Mammary epithelial cell (primary cell): ENCODE measurements at regions of chr19 and their contacts with region 1.

Region 1: DNA sequence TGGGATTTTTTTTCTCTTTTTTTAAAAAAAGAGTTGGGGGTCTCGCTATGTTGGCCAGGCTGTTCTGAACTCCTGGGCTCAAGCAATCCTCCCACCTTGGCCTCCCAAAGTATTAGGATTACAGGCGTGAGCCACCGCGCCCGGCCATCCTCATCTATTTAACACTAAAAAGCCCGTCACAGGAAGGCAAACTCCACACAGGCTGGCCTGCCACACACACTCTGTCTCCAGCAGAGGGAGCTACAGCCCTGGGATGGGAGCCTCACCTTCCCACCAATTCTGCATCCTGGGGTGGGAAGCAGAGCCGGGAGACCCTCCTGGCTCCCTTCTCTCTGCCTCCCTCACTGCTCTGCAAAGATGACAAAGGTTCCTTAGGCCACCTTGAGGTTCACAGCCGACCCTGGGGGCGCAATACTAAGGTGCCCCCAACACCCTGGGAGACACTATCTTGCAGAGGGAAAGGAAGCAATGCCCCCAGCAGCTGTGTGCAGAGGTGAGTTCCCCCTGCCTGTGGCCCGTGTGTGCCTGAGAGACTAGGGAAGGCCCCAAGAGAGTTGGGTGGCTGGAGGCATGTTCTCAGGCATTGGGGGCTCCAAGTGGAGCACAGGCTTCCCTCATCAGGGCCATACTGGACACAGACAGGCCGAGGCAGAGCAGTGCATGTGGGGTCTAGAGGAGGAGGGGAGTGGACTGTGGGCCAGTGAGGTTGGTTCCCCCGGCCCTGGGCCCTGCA is 27.4 kb upstream of the TIMM44 start:
- DNase-seq: no peak
- H3K4me3 ChIP-seq: no peak overlapping the region
- H3K27ac ChIP-seq: no peak overlapping the region
- H3K4me1 ChIP-seq: no peaks in the 10 kb centered on the region
- H3K27me3 ChIP-seq: no peaks in the 10 kb centered on the region
- CTCF ChIP-seq: peak; percentile 79 to 86

Region 2: GRCh38 chr19:7515645-7516151 is 455.2 kb before region 1 on chr19 and contains the start of gene ZNF358:
- CTCF ChIA-PET with region 1: interaction called, 26 read pairs
- dilution Hi-C with region 1: no loop called
- in situ Hi-C with region 1: no loop called
- intact Hi-C with region 1: no loop called
- DNase-seq: no peak
- H3K4me3 ChIP-seq: peak within 1 kb of the TSS; percentile 54 to 58 (median 54)
- H3K27ac ChIP-seq: no peak within 1 kb of the TSS
- H3K4me1 ChIP-seq: peaks cover 4% of the 10 kb centered on the region
- H3K27me3 ChIP-seq: no peaks in the 10 kb centered on the region
- CTCF ChIP-seq: no peak
- total RNA-seq, gene ZNF358: 21.7 to 22.0 TPM

Region 3: DNA sequence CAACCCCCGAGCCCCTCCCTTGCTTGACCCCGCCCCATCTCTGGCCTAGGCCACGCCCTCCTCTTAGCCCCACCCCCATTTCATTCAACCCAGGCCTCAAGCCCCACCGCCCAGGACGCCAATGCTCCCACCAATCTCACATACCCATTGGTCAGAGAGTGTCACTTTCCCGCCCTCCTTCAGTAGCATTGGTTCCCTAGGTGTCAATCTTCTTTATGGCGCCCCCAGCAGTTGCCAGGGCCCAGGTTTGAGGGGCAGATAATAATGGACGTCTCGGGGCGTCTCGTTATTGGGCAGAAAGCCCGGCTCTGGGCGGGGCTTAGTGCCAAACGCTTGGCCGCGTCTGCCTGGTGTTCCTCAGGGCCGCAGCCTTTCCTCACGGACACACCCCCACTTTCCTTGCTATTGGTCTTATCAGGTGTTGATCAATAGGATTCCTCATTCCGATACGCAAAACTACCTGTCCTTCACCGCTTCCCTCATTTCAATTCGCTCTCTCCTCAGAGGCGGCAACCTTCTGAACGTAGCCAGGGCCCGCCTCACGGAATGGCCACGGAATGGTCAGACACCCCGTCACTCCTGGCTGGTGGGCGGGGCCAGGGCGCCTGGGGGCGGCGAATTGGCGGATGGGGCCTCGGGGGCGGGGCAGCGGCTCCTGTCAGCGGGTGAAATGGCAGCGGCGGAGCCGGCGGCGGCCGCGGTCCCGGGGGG is 141.2 kb before region 1 on chr19 and contains the start of gene EVI5L:
- CTCF ChIA-PET with region 1: no interaction called
- dilution Hi-C with region 1: no loop called
- in situ Hi-C with region 1: no loop called
- intact Hi-C with region 1: no loop called
- DNase-seq: peak; percentile 100
- H3K4me3 ChIP-seq: peak within 1 kb of the TSS; percentile 57 to 75 (median 60)
- H3K27ac ChIP-seq: no peak within 1 kb of the TSS
- H3K4me1 ChIP-seq: peaks cover 27% of the 10 kb centered on the region
- H3K27me3 ChIP-seq: no peaks in the 10 kb centered on the region
- CTCF ChIP-seq: no peak
- total RNA-seq, gene EVI5L: 15.2 to 17.5 TPM

Region 4: GRCh38 chr19:7871530-7872305 is 99.2 kb before region 1 on chr19:
- CTCF ChIA-PET with region 1: no interaction called
- dilution Hi-C with region 1: no loop called
- in situ Hi-C with region 1: no loop called
- intact Hi-C with region 1: no loop called
- DNase-seq: peak; percentile 88
- H3K4me3 ChIP-seq: peak overlapping the region in 2 of 3 experiments; percentile 38 to 39
- H3K27ac ChIP-seq: peak overlapping the region; percentile 30
- H3K4me1 ChIP-seq: peaks cover 36% of the 10 kb centered on the region
- H3K27me3 ChIP-seq: peaks cover 17% of the 10 kb centered on the region
- CTCF ChIP-seq: no peak

Region 5: GRCh38 chr19:7903244-7904073 is 67.4 kb before region 1 on chr19 and contains the start of gene MAP2K7:
- CTCF ChIA-PET with region 1: no interaction called
- dilution Hi-C with region 1: no loop called
- in situ Hi-C with region 1: no loop called
- intact Hi-C with region 1: no loop called
- DNase-seq: peak; percentile 99
- H3K4me3 ChIP-seq: peak within 1 kb of the TSS; percentile 69 to 96 (median 73)
- H3K27ac ChIP-seq: peak within 1 kb of the TSS; percentile 68
- H3K4me1 ChIP-seq: peaks cover 19% of the 10 kb centered on the region
- H3K27me3 ChIP-seq: no peaks in the 10 kb centered on the region
- CTCF ChIP-seq: peak; percentile 43 to 60
- total RNA-seq, gene MAP2K7: 11.3 to 33.3 TPM

Region 6: GRCh38 chr19:7919610-7920518 is 51.0 kb before region 1 on chr19 and contains the start of gene SNAPC2:
- CTCF ChIA-PET with region 1: interaction called, 17 read pairs
- dilution Hi-C with region 1: no loop called
- in situ Hi-C with region 1: no loop called
- intact Hi-C with region 1: no loop called
- DNase-seq: peak; percentile 90
- H3K4me3 ChIP-seq: peak within 1 kb of the TSS; percentile 76 to 86 (median 79)
- H3K27ac ChIP-seq: peak within 1 kb of the TSS; percentile 52
- H3K4me1 ChIP-seq: peaks cover 32% of the 10 kb centered on the region
- H3K27me3 ChIP-seq: peaks cover 14% of the 10 kb centered on the region
- CTCF ChIP-seq: peak in 1 of 2 donors; percentile 3
- total RNA-seq, gene SNAPC2: 11.2 to 27.2 TPM

Region 7: DNA sequence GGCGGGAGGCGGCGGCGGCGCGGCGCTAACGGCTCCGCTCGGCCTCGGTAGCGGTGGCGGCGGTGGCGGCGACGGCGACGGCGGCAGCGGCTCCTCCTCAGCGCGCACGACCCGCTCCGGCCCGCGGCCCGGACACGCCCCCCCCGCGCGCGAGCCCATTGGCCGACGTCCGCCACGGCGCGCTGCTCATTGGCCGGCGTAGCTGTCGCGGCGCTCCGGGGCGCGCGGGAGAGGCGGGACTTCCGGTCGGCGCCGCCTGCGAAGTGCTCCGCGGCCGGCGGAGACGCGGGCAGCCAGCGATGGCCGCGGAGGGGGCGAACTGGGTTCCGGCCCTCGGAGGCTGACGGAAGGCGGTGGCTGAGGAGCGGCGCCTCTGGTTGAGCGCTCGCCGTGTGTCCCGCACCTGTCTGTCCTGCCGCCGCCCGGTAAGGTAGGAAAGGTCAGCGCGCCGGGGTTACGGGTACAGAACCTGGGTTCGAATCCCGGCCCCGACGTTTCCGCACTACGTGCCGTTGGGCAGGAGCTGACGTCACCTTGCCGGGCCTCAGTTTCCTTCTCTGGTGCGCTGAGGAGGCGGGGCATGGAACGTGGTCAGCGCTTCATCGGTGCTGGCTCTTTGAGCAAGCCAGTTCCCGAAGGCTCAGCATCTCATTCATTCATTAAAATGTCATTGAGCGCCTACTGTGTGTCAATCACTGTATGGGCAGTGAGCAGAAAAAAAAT is 34.8 kb after region 1 on chr19 and contains the start of gene ELAVL1:
- CTCF ChIA-PET with region 1: no interaction called
- dilution Hi-C with region 1: no loop called
- in situ Hi-C with region 1: no loop called
- intact Hi-C with region 1: loop called (anchors 1 kb)
- DNase-seq: peak; percentile 90
- H3K4me3 ChIP-seq: peak within 1 kb of the TSS; percentile 97 to 100 (median 99)
- H3K27ac ChIP-seq: peak within 1 kb of the TSS; percentile 54
- H3K4me1 ChIP-seq: peaks cover 24% of the 10 kb centered on the region
- H3K27me3 ChIP-seq: no peaks in the 10 kb centered on the region
- CTCF ChIP-seq: no peak
- total RNA-seq, gene ELAVL1: 33.3 to 88.1 TPM

Region 8: DNA sequence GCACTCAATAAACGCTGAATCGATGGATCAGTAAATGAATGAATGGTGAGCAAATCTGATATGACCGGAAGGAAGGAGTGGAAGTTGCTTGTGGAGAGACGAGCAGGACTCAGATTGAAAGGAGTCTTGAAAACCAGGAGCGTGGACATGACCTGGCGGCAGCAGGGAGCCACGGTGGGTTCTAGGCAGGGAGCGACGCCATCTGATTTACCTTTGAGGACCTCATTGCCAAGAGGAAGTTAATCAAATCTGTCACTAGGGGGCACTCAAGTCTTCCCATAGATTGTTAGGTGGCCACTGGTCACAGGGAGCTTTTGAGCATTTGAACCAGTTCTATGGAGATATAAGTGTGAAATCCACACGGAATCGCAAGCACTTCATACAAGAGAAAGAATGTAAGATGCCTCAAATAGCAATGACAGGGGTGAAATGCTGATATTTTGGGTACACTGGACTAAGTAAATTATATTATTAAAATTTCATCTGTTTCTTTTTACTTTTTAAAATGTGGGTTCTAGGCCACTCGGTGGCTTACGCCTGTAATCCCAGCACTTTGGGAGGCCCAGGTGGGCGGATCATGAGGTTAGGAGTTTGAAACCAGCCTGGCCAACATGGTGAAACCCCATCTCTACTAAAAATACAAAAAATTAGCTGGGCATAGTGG is 187.7 kb after region 1 on chr19:
- CTCF ChIA-PET with region 1: interaction called, 3 read pairs
- dilution Hi-C with region 1: no loop called
- in situ Hi-C with region 1: no loop called
- intact Hi-C with region 1: loop called (anchors 2 kb)
- DNase-seq: peak; percentile 76
- H3K4me3 ChIP-seq: no peak overlapping the region
- H3K27ac ChIP-seq: no peak overlapping the region
- H3K4me1 ChIP-seq: peaks cover 9% of the 10 kb centered on the region
- H3K27me3 ChIP-seq: no peaks in the 10 kb centered on the region
- CTCF ChIP-seq: peak; percentile 73 to 78